ENCODE measurements at regions of chr20 and their contacts with region 1.

Region 1: GRCh38 chr20:11979306-11979990 is 61.8 kb downstream of the BTBD3 start:
- DNase-seq: no peak
- ATAC-seq: no peak

Region 2: DNA sequence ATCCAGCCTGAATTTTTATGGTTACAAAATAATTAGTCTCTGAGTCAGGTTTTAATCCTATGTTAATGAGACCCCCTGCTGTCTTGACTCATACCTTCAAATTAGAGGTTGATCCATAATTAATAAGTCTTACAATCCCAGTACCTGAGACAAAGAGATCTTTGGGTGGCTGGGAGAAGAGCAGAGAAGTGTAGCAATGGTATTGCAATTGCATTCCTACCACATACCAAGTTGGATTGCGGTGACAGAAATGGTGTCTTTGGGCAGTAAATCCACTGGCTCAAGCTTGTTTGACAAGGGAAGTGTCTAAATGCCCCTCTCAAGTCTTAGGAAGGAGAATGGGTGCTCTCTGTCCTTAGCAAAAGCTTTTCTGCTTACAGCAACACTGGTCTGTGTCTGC is 88.7 kb after region 1 on chr20:
- intact Hi-C with region 1: no loop called
- DNase-seq: no peak
- ATAC-seq: no peak

Region 3: GRCh38 chr20:12570371-12570770 is 590.9 kb after region 1 on chr20:
- intact Hi-C with region 1: loop called (anchors 5 kb)
- DNase-seq: no peak
- ATAC-seq: no peak